Activated CD4-positive, alpha-beta T cell treated with anti-CD3 and anti-CD28 coated beads, Interleukin-2, amount 10 ng/mL, durations not matched to agents 24 days and 14 days (primary cell): ENCODE measurements at regions of chr3 and their contacts with region 1.

Region 1: DNA sequence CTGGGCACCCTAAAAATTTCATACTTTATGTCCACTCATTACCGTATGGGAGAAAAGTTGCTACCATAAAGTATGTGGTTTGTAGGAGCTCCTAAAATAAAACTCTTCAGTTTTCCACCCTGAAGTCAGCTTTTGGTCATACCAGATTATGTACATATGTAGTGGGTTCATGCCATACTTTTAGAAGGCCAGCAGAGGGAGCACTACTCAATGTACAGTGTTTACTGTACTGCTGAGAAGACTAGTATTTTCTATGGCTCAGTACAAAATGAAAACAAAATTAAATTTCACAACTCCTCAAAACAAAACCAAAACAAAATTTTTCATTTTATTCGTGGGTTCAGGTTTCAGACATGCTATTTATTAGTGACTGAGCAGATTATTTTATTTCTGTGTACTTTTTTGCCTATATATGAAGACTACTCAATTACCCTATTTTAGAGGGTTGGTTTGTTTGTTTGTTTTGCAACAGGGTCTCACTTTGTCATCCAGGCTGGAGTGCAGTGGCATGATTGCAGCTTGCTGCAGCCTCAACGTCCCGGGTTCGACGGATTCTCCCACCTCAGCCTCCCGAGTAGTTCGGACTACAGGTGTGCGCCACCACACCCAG is 24.3 kb downstream of the NXPE3 start:
- DNase-seq: peak; percentile 90
- H3K4me3 Mint-ChIP-seq: no peak overlapping the region
- H3K27ac Mint-ChIP-seq: peak overlapping the region; percentile 26
- H3K4me1 Mint-ChIP-seq: peaks cover 16% of the 10 kb centered on the region
- H3K27me3 Mint-ChIP-seq: no peaks in the 10 kb centered on the region

Region 2: GRCh38 chr3:101695779-101696372 is 107.4 kb before region 1 on chr3:
- intact Hi-C with region 1: loop called (anchors 5 kb)
- DNase-seq: peak; percentile 79
- H3K4me3 Mint-ChIP-seq: no peak overlapping the region
- H3K27ac Mint-ChIP-seq: no peak overlapping the region
- H3K4me1 Mint-ChIP-seq: peaks cover 3% of the 10 kb centered on the region
- H3K27me3 Mint-ChIP-seq: no peaks in the 10 kb centered on the region

Region 3: GRCh38 chr3:102374863-102375634 is 571.8 kb after region 1 on chr3:
- intact Hi-C with region 1: loop called (anchors 10 kb)
- DNase-seq: peak; percentile 56
- H3K4me3 Mint-ChIP-seq: no peak overlapping the region
- H3K27ac Mint-ChIP-seq: no peak overlapping the region
- H3K4me1 Mint-ChIP-seq: no peaks in the 10 kb centered on the region
- H3K27me3 Mint-ChIP-seq: no peaks in the 10 kb centered on the region

Region 4: DNA sequence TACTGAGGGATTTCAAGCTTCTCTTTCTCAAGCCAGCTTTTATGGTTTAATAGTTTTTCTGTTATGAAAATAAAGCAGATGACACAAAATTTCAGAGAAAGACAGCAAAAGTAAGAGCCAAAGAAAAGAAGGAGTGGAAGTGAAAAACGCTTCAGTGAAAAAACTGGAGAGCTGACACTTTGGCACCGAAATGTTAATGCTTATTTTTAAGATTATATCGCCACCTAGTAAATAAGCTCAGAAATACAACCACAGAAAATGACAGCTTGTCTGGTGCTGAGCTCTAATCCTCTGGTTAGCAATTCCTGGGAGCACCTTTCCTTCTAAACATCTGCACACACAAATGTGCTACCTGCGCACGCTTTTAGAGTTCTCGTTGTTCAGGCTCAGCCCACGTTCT is 733.2 kb after region 1 on chr3:
- intact Hi-C with region 1: loop called (anchors 5 kb)
- DNase-seq: peak; percentile 57
- H3K4me3 Mint-ChIP-seq: no peak overlapping the region
- H3K27ac Mint-ChIP-seq: no peak overlapping the region
- H3K4me1 Mint-ChIP-seq: peaks cover 3% of the 10 kb centered on the region
- H3K27me3 Mint-ChIP-seq: peaks cover 9% of the 10 kb centered on the region